ENCODE measurements at regions of chr10 and their contacts with region 1.

Region 1: GRCh38 chr10:94123258-94123995 is 129.7 kb downstream of the PLCE1 start:
- DNase-seq: peak; percentile 93
- ATAC-seq: peak; percentile 89
- H3K4me3 ChIP-seq: no peak overlapping the region
- H3K27ac ChIP-seq: peak overlapping the region; percentile 90
- H3K4me1 ChIP-seq: peaks cover 19% of the 10 kb centered on the region
- H3K27me3 ChIP-seq: no peaks in the 10 kb centered on the region
- CTCF ChIP-seq: no peak
- POLR2A ChIP-seq: no peak
- RAD21 ChIP-seq: no peak

Region 2: GRCh38 chr10:93993782-93994437 is 129.5 kb before region 1 on chr10 and contains the start of gene PLCE1:
- CTCF ChIA-PET with region 1: no interaction called
- POLR2A ChIA-PET with region 1: no interaction called
- dilution Hi-C with region 1: no loop called
- in situ Hi-C with region 1: no loop called
- intact Hi-C with region 1: no loop called
- DNase-seq: peak; percentile 19
- ATAC-seq: peak; percentile 88
- H3K4me3 ChIP-seq: peak within 1 kb of the TSS; percentile 56
- H3K27ac ChIP-seq: no peak within 1 kb of the TSS; the same call in 1 of the 2 replicates
- H3K4me1 ChIP-seq: peaks cover 7% of the 10 kb centered on the region
- H3K27me3 ChIP-seq: peaks cover 6% of the 10 kb centered on the region; the same call in 1 of the 2 replicates
- CTCF ChIP-seq: 0 out of 2 replicates have a peak, but pooled peaks have one; percentile 14
- POLR2A ChIP-seq: no peak
- RAD21 ChIP-seq: no peak
- total RNA-seq, gene PLCE1: 3.9 and 4.5 TPM in 2 replicates

Region 3: GRCh38 chr10:94108200-94108599 is 15.2 kb before region 1 on chr10:
- CTCF ChIA-PET with region 1: no interaction called
- POLR2A ChIA-PET with region 1: no interaction called
- dilution Hi-C with region 1: no loop called
- in situ Hi-C with region 1: no loop called
- intact Hi-C with region 1: loop called (anchors 2 kb)
- DNase-seq: peak; percentile 95
- ATAC-seq: peak; percentile 86
- H3K4me3 ChIP-seq: no peak overlapping the region
- H3K27ac ChIP-seq: no peak overlapping the region
- H3K4me1 ChIP-seq: peaks cover 17% of the 10 kb centered on the region
- H3K27me3 ChIP-seq: no peaks in the 10 kb centered on the region; the same call in 1 of the 2 replicates
- CTCF ChIP-seq: no peak
- POLR2A ChIP-seq: no peak
- RAD21 ChIP-seq: no peak; the same call in none of the 2 replicates

Region 4: DNA sequence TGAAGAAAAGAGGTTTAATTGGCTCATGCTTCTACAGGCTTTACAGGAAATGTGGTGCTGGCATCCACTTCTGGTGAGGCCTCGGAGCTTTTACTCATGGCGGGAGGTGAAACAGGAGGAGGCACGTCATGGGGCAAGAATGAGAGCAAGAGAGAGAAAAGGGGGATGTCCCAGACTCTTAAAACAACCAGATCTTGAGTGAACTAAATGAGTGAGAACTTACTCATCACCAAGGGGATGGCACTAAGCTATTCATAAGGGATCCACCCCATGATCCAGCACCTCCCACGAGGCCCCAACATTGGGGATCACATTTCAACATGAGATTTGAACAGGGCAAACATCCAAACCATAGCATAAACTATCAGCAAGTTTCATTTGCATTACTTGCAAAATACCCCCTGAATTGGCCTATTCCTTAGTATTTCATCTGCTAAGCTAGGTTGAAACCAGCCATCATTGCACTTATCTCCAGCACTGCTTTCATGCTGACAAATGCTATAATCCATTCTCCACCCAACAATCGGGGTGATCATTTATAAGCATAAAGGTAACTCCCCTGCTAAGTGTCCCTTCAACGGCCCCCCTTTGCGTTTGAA is 60.3 kb after region 1 on chr10:
- CTCF ChIA-PET with region 1: no interaction called
- POLR2A ChIA-PET with region 1: no interaction called
- dilution Hi-C with region 1: no loop called
- in situ Hi-C with region 1: no loop called
- intact Hi-C with region 1: loop called (anchors 2 kb)
- DNase-seq: peak; percentile 100
- ATAC-seq: peak; percentile 98
- H3K4me3 ChIP-seq: no peak overlapping the region
- H3K27ac ChIP-seq: peak overlapping the region; percentile 91; the same call in 1 of the 2 replicates
- H3K4me1 ChIP-seq: peaks cover 13% of the 10 kb centered on the region
- H3K27me3 ChIP-seq: no peaks in the 10 kb centered on the region
- CTCF ChIP-seq: no peak
- POLR2A ChIP-seq: no peak
- RAD21 ChIP-seq: 0 out of 2 replicates have a peak, but pooled peaks have one; percentile 12

Region 5: DNA sequence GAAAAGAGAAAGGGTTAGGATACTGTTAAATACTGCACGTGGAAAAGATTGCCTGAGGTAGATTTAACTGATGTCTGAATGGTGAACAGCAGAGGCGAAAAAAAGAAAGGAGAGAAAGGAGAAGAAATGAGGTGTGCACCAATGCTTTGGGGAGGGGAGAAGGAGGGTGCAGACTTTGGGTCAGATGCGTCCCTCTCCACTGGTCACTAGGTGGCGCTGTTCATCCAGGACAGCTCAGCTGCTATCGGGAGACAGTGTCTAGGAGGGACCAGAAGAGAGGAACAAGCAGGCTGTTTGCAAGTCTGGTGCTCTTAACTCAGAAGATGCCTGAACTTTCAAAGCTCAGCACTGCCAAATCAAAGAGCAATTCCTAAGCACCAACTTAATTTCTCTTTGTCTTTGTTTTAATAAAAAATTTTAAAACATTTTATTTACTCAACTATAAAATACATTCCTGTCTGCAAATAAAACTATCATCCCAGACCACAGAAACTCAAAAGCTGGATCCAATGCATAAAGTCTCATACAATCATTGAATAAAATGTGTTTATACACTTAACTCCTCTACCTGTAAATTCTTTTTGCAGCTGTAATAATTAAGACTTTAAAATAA is 1251.3 kb after region 1 on chr10:
- CTCF ChIA-PET with region 1: no interaction called
- POLR2A ChIA-PET with region 1: no interaction called
- dilution Hi-C with region 1: no loop called
- in situ Hi-C with region 1: no loop called
- intact Hi-C with region 1: no loop called
- DNase-seq: peak; percentile 57
- ATAC-seq: peak; percentile 84; the same call in 1 of the 2 replicates
- H3K4me3 ChIP-seq: no peak overlapping the region
- H3K27ac ChIP-seq: no peak overlapping the region
- H3K4me1 ChIP-seq: no peaks in the 10 kb centered on the region
- H3K27me3 ChIP-seq: peaks cover 30% of the 10 kb centered on the region
- CTCF ChIP-seq: peak; percentile 63
- POLR2A ChIP-seq: no peak
- RAD21 ChIP-seq: peak; percentile 67

Measured in IMR-90 (cell line).